ENCODE measurements at regions of chr1 and their contacts with region 1.

Region 1: GRCh38 chr1:45686317-45687013 is at the start of gene GPBP1L1:
- DNase-seq: peak; percentile 98
- H3K4me3 Mint-ChIP-seq: peak within 1 kb of the TSS; percentile 100
- H3K27ac Mint-ChIP-seq: peak within 1 kb of the TSS; percentile 100
- H3K4me1 Mint-ChIP-seq: peaks cover 55% of the 10 kb centered on the region
- H3K27me3 Mint-ChIP-seq: no peaks in the 10 kb centered on the region
- total RNA-seq, gene GPBP1L1: 130 to 134 TPM

Region 2: DNA sequence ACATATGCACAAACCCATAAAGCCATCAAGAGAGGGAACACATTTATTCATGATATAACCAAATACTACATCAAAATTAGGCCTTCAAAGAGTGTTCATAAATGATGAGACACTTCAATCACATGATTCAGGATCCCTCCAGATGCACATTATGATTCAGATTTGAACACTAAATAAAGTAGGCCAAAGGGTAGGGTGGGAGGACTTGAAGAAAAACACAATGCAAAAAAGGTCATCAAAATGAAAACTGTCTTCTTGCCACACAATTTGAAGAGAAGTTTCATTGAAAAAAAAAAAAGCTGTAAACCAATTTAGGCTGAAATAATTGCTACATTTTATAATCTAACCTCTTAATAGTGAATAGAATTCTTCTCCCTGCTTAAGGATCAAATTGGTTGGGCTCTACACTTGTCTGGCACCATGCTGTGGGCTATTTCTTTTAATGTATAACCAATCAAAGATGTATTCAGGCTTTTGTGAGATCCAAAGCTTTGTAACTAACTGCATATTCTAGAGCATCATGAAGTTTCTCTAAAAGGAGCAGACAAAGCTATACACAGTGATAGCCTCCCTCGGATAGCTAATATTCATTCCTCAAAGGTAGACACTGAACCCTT is 538.1 kb before region 1 on chr1:
- CTCF ChIA-PET with region 1: no interaction called
- POLR2A ChIA-PET with region 1: no interaction called
- DNase-seq: no peak
- H3K4me3 Mint-ChIP-seq: no peak overlapping the region
- H3K27ac Mint-ChIP-seq: no peak overlapping the region
- H3K4me1 Mint-ChIP-seq: no peaks in the 10 kb centered on the region
- H3K27me3 Mint-ChIP-seq: no peaks in the 10 kb centered on the region

Region 3: DNA sequence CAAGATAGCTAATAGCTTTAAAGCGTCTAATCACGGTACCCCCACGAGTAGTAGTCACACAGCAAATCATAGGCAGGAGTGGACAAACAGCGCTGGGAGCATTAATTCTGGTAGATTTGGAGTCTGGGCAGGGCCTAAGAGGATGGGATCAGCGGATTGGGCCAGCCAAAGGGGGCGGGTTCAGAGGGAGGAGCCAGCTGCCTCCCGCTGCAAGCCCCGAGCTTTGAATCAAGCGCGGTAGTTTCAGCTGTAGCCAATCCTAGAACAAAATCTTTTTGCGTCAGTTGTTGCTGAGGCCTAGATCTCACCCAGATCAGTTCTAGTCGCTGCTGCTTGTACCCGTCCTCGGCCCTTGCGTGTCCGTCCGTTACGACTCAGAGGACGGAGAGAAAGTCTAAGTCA is 103.2 kb before region 1 on chr1:
- CTCF ChIA-PET with region 1: no interaction called
- POLR2A ChIA-PET with region 1: interaction called, 43 read pairs
- DNase-seq: peak; percentile 96
- H3K4me3 Mint-ChIP-seq: peak overlapping the region; percentile 88
- H3K27ac Mint-ChIP-seq: peak overlapping the region; percentile 98
- H3K4me1 Mint-ChIP-seq: peaks cover 29% of the 10 kb centered on the region
- H3K27me3 Mint-ChIP-seq: no peaks in the 10 kb centered on the region

Region 4: DNA sequence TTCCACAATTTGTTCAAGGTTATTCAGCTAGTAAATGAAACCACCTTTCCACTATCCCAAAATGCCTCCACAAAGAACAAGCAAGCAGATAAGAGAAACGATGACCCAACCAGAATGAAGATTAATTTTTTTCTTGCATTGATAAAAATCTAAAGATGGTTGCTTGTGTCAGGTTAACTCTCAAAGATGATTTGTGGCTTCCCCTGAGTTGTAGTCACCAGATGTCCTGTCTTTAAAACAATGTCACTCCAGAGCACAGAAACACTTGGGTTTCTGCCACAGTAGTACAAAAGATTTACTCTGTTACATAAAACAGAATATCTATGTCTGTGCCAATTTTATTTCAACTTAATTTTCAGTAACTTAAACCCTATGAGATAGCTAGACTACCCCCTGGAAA is 51.3 kb before region 1 on chr1:
- CTCF ChIA-PET with region 1: no interaction called
- POLR2A ChIA-PET with region 1: no interaction called
- DNase-seq: no peak
- H3K4me3 Mint-ChIP-seq: no peak overlapping the region
- H3K27ac Mint-ChIP-seq: no peak overlapping the region
- H3K4me1 Mint-ChIP-seq: no peaks in the 10 kb centered on the region
- H3K27me3 Mint-ChIP-seq: no peaks in the 10 kb centered on the region

Region 5: GRCh38 chr1:45654540-45655280 is 31.8 kb before region 1 on chr1:
- CTCF ChIA-PET with region 1: no interaction called
- POLR2A ChIA-PET with region 1: interaction called, 16 read pairs
- DNase-seq: no peak
- H3K4me3 Mint-ChIP-seq: no peak overlapping the region
- H3K27ac Mint-ChIP-seq: peak overlapping the region; percentile 45
- H3K4me1 Mint-ChIP-seq: peaks cover 24% of the 10 kb centered on the region
- H3K27me3 Mint-ChIP-seq: no peaks in the 10 kb centered on the region

Region 6: GRCh38 chr1:45673956-45674355 is 12.5 kb before region 1 on chr1:
- CTCF ChIA-PET with region 1: interaction called, 5 read pairs
- POLR2A ChIA-PET with region 1: interaction called, 14 read pairs
- DNase-seq: no peak
- H3K4me3 Mint-ChIP-seq: no peak overlapping the region
- H3K27ac Mint-ChIP-seq: no peak overlapping the region
- H3K4me1 Mint-ChIP-seq: peaks cover 13% of the 10 kb centered on the region
- H3K27me3 Mint-ChIP-seq: no peaks in the 10 kb centered on the region

Region 7: GRCh38 chr1:45803301-45803780 is 116.9 kb after region 1 on chr1 and contains the start of gene MAST2:
- CTCF ChIA-PET with region 1: interaction called, 3 read pairs
- POLR2A ChIA-PET with region 1: interaction called, 10 read pairs
- DNase-seq: peak; percentile 88
- H3K4me3 Mint-ChIP-seq: peak within 1 kb of the TSS; percentile 86
- H3K27ac Mint-ChIP-seq: peak within 1 kb of the TSS; percentile 73
- H3K4me1 Mint-ChIP-seq: peaks cover 37% of the 10 kb centered on the region
- H3K27me3 Mint-ChIP-seq: no peaks in the 10 kb centered on the region
- total RNA-seq, gene MAST2: 25.4 to 27.8 TPM

Measured in activated CD4-positive, alpha-beta memory T cell treated with anti-CD3 and anti-CD28 coated beads, Interleukin-2, amount 10 ng/mL, durations not matched to agents 7 days and 5 days (primary cell).